Ascending aorta (tissue), 2 donors: ENCODE measurements at regions of chr20 and their contacts with region 1.

Region 1: DNA sequence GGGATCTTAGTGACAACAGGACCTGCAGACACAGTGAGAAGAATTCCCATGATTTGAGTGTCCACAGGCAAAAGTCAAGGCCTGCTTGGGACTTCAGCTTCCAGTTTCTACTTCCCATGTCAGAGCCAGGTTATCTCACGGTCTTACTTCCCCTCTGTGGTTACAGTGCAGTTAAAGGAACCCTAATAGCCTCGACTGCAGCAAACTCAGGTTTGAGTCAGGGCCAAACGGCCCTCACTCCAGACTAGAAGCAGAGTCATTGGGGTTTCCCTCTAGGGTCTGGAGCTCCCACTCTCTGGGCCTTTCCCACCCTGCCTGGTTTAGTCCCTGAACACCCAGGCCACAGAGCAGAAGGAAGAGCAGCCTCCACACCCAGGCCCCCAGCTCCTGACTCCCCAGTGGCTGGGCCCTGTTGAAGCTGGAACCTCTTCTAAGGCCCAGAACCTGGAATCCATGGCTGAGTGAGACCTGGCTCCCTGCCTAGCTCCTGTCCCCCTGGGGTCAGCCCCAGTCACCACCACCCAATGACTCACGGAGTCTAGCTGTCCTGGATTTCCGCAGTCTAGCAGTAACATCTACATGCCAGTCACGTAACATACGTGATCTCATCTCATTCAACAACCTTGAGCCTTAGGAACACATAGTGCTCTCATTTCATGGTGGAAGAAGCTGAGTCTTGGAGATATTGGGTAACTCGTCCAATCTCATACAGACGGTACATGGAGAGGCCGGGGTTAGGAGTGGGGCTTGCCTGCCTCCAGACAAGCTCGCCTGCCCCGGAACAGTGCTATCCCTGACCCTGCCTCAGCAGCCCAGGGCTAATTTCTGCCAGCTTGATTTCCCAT is 9.2 kb upstream of the GHRH start:
- DNase-seq: no peak
- H3K4me3 ChIP-seq: no peak overlapping the region
- H3K27ac ChIP-seq: no peak overlapping the region
- H3K4me1 ChIP-seq: no peaks in the 10 kb centered on the region
- H3K27me3 ChIP-seq: no peaks in the 10 kb centered on the region
- CTCF ChIP-seq: no peak

Region 2: GRCh38 chr20:37534401-37535157 is 263.8 kb after region 1 on chr20:
- intact Hi-C with region 1: loop called (anchors 1 kb)
- DNase-seq: peak in 1 of 2 donors; percentile 70
- H3K4me3 ChIP-seq: no peak overlapping the region
- H3K27ac ChIP-seq: no peak overlapping the region
- H3K4me1 ChIP-seq: no peaks in the 10 kb centered on the region
- H3K27me3 ChIP-seq: no peaks in the 10 kb centered on the region
- CTCF ChIP-seq: peak; percentile 80 to 86 (median 84)

Region 3: DNA sequence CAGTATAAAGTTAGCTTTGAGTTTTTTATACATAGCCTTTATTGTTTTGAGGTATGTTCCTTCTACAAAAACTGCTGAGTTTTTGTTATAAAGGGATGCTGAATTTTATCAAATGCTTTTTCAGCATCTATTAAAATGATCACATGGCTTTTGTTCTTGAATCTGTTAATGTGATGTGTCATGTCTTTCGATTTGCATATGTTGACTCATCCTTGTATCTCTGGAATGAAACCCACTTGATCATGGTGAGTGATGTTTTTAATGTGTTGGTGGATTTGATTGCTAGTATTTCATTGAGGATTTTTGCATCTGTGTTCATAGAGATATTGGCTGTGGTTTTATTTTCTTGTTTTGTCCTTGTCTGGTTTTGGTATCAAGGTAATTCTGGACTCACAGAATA is 281.6 kb after region 1 on chr20:
- intact Hi-C with region 1: no loop called
- DNase-seq: no peak
- H3K4me3 ChIP-seq: no peak overlapping the region
- H3K27ac ChIP-seq: no peak overlapping the region
- H3K4me1 ChIP-seq: no peaks in the 10 kb centered on the region
- H3K27me3 ChIP-seq: no peaks in the 10 kb centered on the region
- CTCF ChIP-seq: no peak